GM10248 (cell line): ENCODE measurements at regions of chr3 and their contacts with region 1.

Region 1: DNA sequence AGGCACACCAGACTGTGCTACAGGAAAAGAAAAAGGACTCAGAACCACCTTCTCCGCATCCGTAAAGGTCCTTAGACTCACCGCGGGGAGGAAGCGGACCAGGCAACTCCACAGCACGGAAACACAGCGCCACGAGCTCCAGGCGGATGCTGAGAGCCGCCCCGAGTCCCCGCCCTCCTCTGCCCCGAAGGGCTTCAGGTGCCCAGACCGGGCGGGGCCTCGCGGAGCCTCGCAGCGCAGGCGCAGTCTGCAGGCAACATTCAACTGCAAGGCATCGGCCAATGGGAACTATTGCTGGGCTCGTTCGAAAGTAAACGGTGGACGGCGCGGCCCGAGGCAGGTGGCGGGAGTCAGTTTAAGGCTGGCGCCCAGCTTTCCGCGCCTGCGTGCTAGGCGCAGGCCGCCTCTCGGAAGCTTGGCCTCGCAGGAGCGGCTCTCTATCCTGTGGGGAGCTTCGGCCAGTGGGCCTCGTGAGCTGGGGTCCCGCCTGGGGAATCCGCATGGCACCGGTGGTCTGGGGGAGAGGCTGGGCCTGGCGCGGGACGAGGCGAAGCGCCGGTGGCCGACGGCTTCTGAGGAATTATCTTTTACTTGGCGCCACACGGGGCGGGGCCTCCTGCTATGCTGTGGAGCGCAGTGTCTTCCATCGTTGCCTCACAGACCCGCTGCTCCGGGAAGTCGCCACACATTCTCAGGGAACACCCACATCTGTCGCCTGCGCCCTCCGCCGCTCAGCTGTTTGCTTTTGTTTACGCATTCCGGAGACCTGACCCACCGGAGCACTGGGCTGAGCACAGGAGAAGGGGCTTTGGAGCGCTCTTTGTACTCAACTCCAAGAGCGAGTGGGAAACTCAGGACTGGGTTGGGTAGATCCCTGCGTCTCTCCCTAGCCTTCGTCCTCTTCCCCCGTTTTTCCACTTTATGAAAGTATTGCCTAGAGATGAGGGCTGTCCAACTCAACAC is at the start of gene TRIM59:
- DNase-seq: peak; percentile 99
- CTCF ChIP-seq: no peak

Region 2: DNA sequence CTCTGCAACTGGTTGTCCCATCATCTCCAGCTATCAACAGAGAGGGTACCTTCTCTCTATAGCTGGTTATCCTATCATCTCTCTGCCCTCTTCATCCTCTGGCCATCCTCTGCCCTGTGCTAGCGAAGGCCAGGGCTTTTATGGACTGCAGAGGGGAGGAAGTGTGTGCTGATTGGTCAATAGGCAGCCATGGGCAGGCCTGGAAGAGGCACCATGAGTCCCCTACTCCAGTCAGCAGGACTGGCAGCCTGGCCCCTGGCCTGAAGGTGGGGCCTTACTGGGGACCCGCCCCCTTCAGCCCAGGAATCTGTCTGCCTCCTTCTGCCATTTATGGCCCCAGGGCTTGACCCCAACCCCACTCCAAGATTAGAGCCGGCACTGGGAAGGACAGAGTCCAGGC is 10.1 kb after region 1 on chr3:
- CTCF ChIA-PET with region 1: interaction called, 10 read pairs
- POLR2A ChIA-PET with region 1: no interaction called
- DNase-seq: no peak
- CTCF ChIP-seq: no peak

Region 3: GRCh38 chr3:160486459-160486869 is 36.5 kb after region 1 on chr3:
- CTCF ChIA-PET with region 1: interaction called, 16 read pairs
- POLR2A ChIA-PET with region 1: no interaction called
- DNase-seq: peak; percentile 30
- CTCF ChIP-seq: peak; percentile 46